ENCODE measurements at regions of chr18 and their contacts with region 1.

Region 1: GRCh38 chr18:45571714-45572113 is 43.6 kb upstream of the SLC14A2 start:
- DNase-seq: no peak
- H3K4me3 ChIP-seq: no peak overlapping the region
- H3K4me3 Mint-ChIP-seq: no peak overlapping the region
- H3K27ac Mint-ChIP-seq: no peak overlapping the region
- H3K4me1 ChIP-seq: peaks cover 16% of the 10 kb centered on the region
- H3K4me1 Mint-ChIP-seq: peaks cover under 1% of the 10 kb centered on the region
- H3K27me3 ChIP-seq: no peaks in the 10 kb centered on the region
- H3K27me3 Mint-ChIP-seq: no peaks in the 10 kb centered on the region
- CTCF ChIP-seq: peak in 1 of 2 experiments; percentile 7

Region 2: GRCh38 chr18:45547910-45548309 is 23.8 kb before region 1 on chr18:
- CTCF ChIA-PET with region 1: no interaction called
- POLR2A ChIA-PET with region 1: no interaction called
- intact Hi-C with region 1: loop called (anchors 1 kb)
- DNase-seq: no peak
- H3K4me3 ChIP-seq: no peak overlapping the region
- H3K4me3 Mint-ChIP-seq: no peak overlapping the region
- H3K27ac Mint-ChIP-seq: peak overlapping the region; percentile 86
- H3K4me1 ChIP-seq: peaks cover 23% of the 10 kb centered on the region
- H3K4me1 Mint-ChIP-seq: peaks cover 21% of the 10 kb centered on the region
- H3K27me3 ChIP-seq: no peaks in the 10 kb centered on the region
- H3K27me3 Mint-ChIP-seq: no peaks in the 10 kb centered on the region
- CTCF ChIP-seq: no peak

Region 3: DNA sequence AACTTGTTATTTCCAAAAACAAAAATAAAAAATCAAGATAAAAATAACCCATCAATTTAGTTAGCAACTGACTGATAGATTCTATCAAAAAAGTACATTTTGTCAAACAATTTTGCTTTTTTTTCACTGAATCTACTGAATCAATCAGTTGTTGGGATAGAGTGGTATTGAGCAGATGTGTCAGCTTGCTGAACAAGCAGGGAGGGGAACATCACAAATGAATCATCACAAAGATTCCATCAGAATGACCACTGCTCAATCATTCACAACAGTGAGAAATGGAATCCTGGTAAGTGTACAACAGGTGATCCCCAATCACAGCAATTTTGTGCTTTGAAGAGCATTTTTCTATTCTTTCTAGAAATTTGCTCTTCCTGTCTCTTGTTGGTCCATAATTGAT is 31.2 kb after region 1 on chr18:
- CTCF ChIA-PET with region 1: no interaction called
- POLR2A ChIA-PET with region 1: no interaction called
- intact Hi-C with region 1: no loop called
- DNase-seq: no peak
- H3K4me3 ChIP-seq: no peak overlapping the region
- H3K4me3 Mint-ChIP-seq: no peak overlapping the region
- H3K27ac Mint-ChIP-seq: no peak overlapping the region
- H3K4me1 ChIP-seq: no peaks in the 10 kb centered on the region
- H3K4me1 Mint-ChIP-seq: no peaks in the 10 kb centered on the region
- H3K27me3 ChIP-seq: no peaks in the 10 kb centered on the region
- H3K27me3 Mint-ChIP-seq: no peaks in the 10 kb centered on the region
- CTCF ChIP-seq: no peak

Measured in Caco-2 (cell line).